ENCODE measurements at regions of chr2 and their contacts with region 1.

Region 1: DNA sequence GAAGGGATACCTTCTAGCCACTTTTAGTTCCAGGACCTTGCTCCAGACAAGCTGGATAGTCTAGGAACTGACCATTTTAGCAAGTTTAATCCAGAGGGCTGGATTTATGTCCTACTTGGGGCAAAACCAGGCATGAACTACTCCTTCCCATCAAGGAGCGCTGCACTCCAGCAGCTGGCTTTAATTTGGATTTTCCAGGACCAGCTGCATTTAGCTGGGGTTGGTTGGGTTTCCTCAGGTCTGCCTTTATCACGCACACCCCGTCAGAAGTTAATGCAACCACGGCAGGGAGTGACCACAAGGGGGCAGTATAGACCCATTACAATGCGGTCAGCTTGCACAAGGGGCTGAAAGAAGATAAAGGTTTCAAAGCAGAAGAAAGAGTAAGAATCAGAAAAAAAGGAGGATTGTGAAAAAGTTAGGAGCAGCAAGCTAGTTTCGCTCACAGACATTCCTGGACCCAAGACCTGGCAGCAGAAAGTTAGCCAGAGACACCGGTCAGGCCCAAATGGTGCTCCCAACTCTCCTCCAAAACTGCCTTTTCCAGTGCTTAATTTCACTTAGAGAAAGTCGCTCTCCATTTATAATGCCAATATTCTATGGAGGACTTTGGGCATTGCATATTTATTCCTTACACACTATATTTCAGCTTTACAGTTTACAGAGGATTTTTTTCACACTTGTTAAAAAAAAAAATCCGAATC is 40.1 kb downstream of the SLC4A1AP start:
- DNase-seq: peak; percentile 83
- ATAC-seq: peak; percentile 78
- H3K4me3 ChIP-seq: no peak overlapping the region
- H3K4me3 Mint-ChIP-seq: no peak overlapping the region
- H3K27ac ChIP-seq: no peak overlapping the region
- H3K27ac Mint-ChIP-seq: no peak overlapping the region
- H3K4me1 ChIP-seq: no peaks in the 10 kb centered on the region
- H3K4me1 Mint-ChIP-seq: peaks cover 4% of the 10 kb centered on the region
- H3K27me3 ChIP-seq: no peaks in the 10 kb centered on the region
- H3K27me3 Mint-ChIP-seq: peaks cover 12% of the 10 kb centered on the region
- CTCF ChIP-seq: peak; percentile 91

Region 2: DNA sequence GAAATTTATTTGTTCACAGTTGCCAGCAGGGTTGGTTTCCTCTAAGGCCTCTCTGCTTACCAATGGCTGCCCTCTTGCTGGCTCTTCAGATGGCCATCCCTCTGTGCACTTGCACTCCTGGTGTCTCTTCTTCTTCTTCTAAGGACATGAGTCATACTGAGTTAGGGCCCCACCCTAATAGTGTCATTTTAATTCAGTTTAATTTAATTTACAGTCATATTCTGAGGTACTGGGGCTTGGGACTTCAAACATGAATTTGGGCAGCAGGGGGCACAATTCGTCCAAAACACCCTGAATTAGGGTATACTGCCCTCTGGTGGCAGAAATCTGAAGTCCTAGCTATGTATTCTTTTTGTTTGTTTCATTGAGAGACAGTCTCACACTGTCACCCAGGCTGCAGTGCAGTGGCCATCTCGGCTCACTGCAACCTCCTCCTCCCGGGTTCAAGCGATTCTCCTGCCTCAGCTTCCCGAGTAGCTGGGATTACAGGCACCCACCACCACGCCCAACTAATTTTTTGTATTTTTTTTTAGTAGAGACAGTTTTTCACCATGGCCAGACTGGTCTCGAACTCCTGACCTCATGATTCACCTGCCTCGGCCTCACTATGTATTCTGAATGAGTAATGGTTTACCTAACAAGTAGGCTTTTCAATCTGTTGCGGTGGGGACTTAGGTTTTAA is 20.3 kb before region 1 on chr2:
- CTCF ChIA-PET with region 1: interaction called, 34 read pairs
- POLR2A ChIA-PET with region 1: no interaction called
- intact Hi-C with region 1: no loop called
- DNase-seq: peak; percentile 91
- ATAC-seq: peak; percentile 90
- H3K4me3 ChIP-seq: no peak overlapping the region
- H3K4me3 Mint-ChIP-seq: no peak overlapping the region
- H3K27ac ChIP-seq: no peak overlapping the region
- H3K27ac Mint-ChIP-seq: peak overlapping the region; percentile 59
- H3K4me1 ChIP-seq: no peaks in the 10 kb centered on the region
- H3K4me1 Mint-ChIP-seq: peaks cover 5% of the 10 kb centered on the region
- H3K27me3 ChIP-seq: no peaks in the 10 kb centered on the region
- H3K27me3 Mint-ChIP-seq: no peaks in the 10 kb centered on the region
- CTCF ChIP-seq: peak; percentile 100

Region 3: GRCh38 chr2:27723372-27724144 is 19.8 kb after region 1 on chr2:
- CTCF ChIA-PET with region 1: interaction called, 13 read pairs
- POLR2A ChIA-PET with region 1: no interaction called
- intact Hi-C with region 1: no loop called
- DNase-seq: peak; percentile 29
- ATAC-seq: peak; percentile 51
- H3K4me3 ChIP-seq: no peak overlapping the region
- H3K4me3 Mint-ChIP-seq: no peak overlapping the region
- H3K27ac ChIP-seq: no peak overlapping the region
- H3K27ac Mint-ChIP-seq: no peak overlapping the region
- H3K4me1 ChIP-seq: no peaks in the 10 kb centered on the region
- H3K4me1 Mint-ChIP-seq: no peaks in the 10 kb centered on the region
- H3K27me3 ChIP-seq: peaks cover 0 to 6% (median 1%) of the 10 kb centered on the region in 4 experiments
- H3K27me3 Mint-ChIP-seq: peaks cover 8% of the 10 kb centered on the region
- CTCF ChIP-seq: peak; percentile 64

Region 4: DNA sequence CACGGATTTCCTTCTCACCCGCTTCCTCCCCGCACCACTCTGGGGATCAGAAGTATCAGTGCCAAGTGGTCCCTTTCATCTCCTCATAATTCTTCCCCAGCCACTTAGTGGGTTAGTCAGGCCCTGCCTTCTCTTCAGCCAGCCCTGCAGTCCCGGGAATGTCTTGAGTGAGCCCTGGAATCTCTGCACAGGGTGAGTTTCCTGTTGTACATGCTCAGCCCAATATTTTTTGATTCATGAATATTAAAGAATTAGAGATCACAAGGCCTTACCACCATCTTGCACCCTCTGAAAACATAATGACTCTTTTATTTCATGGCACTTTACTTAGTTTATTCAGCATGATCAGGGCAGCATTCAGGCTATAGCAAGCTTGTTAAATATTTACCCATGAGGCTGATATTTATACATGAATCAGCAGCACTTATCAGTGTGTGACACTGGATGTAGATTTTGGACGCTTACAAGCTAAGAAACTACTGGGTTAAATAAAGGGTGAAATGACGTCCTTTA is 529.4 kb after region 1 on chr2:
- CTCF ChIA-PET with region 1: no interaction called
- POLR2A ChIA-PET with region 1: no interaction called
- intact Hi-C with region 1: no loop called
- DNase-seq: no peak
- ATAC-seq: no peak
- H3K4me3 ChIP-seq: no peak overlapping the region
- H3K4me3 Mint-ChIP-seq: no peak overlapping the region
- H3K27ac ChIP-seq: no peak overlapping the region
- H3K27ac Mint-ChIP-seq: no peak overlapping the region
- H3K4me1 ChIP-seq: no peaks in the 10 kb centered on the region
- H3K4me1 Mint-ChIP-seq: no peaks in the 10 kb centered on the region
- H3K27me3 ChIP-seq: no peaks in the 10 kb centered on the region
- H3K27me3 Mint-ChIP-seq: no peaks in the 10 kb centered on the region
- CTCF ChIP-seq: no peak

Region 5: GRCh38 chr2:28413142-28413898 is 709.5 kb after region 1 on chr2:
- CTCF ChIA-PET with region 1: interaction called, 3 read pairs
- POLR2A ChIA-PET with region 1: no interaction called
- intact Hi-C with region 1: loop called (anchors 5 kb)
- DNase-seq: no peak
- ATAC-seq: no peak
- H3K4me3 ChIP-seq: no peak overlapping the region
- H3K4me3 Mint-ChIP-seq: no peak overlapping the region
- H3K27ac ChIP-seq: no peak overlapping the region
- H3K27ac Mint-ChIP-seq: no peak overlapping the region
- H3K4me1 ChIP-seq: peaks cover 0 to 8% of the 10 kb centered on the region in 2 donors
- H3K4me1 Mint-ChIP-seq: peaks cover 17% of the 10 kb centered on the region
- H3K27me3 ChIP-seq: no peaks in the 10 kb centered on the region
- H3K27me3 Mint-ChIP-seq: no peaks in the 10 kb centered on the region
- CTCF ChIP-seq: no peak

Region 6: GRCh38 chr2:28566521-28567041 is 862.8 kb after region 1 on chr2:
- CTCF ChIA-PET with region 1: no interaction called
- POLR2A ChIA-PET with region 1: no interaction called
- intact Hi-C with region 1: loop called (anchors 1 kb)
- DNase-seq: peak; percentile 91
- ATAC-seq: peak; percentile 99
- H3K4me3 ChIP-seq: peak overlapping the region; percentile 36 to 90 (median 70)
- H3K4me3 Mint-ChIP-seq: peak overlapping the region; percentile 95
- H3K27ac ChIP-seq: no peak overlapping the region
- H3K27ac Mint-ChIP-seq: peak overlapping the region; percentile 72
- H3K4me1 ChIP-seq: peaks cover 5 to 11% of the 10 kb centered on the region in 2 donors
- H3K4me1 Mint-ChIP-seq: peaks cover 11% of the 10 kb centered on the region
- H3K27me3 ChIP-seq: peaks cover 0 to 5% (median 2%) of the 10 kb centered on the region in 4 experiments
- H3K27me3 Mint-ChIP-seq: peaks cover 14% of the 10 kb centered on the region
- CTCF ChIP-seq: peak; percentile 100

Measured in B cell (primary cell).